ENCODE measurements at regions of chr3 and their contacts with region 1.

Region 1: DNA sequence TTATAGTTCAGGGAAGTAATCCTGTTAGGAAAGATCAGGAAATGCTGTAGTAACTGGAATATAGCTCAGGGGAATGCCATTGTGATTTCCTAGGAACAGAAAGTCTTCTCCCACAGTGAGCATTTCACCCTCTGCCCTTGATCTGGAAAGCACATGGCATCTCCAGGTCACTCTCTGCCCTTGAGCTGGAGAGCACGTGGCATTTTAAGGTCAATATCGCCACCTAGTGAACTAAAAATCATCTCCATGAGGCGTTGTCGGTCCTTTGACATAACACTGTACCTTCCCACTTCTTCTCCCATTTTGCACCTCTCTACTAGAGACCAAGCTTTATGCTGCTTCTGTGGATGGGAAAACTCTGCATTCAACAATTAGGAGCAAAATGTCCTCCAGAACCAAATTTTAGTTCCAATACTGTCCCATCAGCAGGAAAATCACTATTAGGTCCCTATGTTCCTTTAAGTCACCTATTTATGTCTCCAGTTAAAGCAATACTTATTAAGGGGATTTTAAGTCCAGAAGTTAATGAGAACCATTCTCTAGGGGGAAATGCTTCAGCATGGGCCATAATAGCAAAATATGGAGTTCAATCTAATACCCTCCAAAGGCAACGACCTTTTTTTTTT is 54.7 kb upstream of the GK5 start:
- DNase-seq: peak; percentile 44
- H3K4me3 Mint-ChIP-seq: no peak overlapping the region
- H3K27ac Mint-ChIP-seq: no peak overlapping the region
- H3K4me1 Mint-ChIP-seq: peaks cover 8% of the 10 kb centered on the region
- H3K27me3 Mint-ChIP-seq: no peaks in the 10 kb centered on the region

Region 2: DNA sequence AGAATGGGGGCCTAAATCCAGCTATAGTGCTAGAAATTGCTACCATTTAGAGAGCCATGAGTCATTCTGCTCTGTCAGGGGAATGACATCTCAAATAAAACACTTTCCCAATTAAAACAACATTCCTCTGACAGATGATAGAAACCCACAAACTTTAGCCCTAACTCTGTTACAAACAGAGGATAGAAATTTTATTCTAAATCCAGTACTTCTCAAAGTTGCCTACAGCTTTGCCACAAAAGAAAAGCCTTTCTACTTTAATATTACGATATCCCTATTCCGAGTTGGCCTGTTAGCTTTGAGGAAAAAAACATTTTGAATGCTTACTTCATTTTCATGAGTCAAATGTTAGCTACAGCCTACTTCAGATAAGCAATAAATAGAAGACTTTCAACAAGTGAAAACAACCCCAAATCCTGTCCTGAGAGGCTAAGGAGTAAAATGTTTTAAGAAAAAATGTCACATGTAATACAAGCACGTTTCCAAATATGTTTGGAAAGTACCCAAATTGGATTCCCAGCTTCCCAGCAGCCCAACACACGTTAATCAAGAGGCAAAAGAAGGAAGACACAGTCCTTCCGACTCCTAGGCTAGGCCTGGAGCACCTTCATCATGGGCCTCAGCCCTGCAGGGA is 320.0 kb before region 1 on chr3:
- CTCF ChIA-PET with region 1: interaction called, 20 read pairs
- POLR2A ChIA-PET with region 1: no interaction called
- intact Hi-C with region 1: loop called (anchors 1 kb)
- DNase-seq: no peak
- H3K4me3 Mint-ChIP-seq: no peak overlapping the region
- H3K27ac Mint-ChIP-seq: no peak overlapping the region
- H3K4me1 Mint-ChIP-seq: peaks cover 3% of the 10 kb centered on the region
- H3K27me3 Mint-ChIP-seq: no peaks in the 10 kb centered on the region

Region 3: GRCh38 chr3:142022381-142022780 is 257.7 kb before region 1 on chr3:
- CTCF ChIA-PET with region 1: interaction called, 4 read pairs
- POLR2A ChIA-PET with region 1: no interaction called
- intact Hi-C with region 1: loop called (anchors 5 kb)
- DNase-seq: peak; percentile 22
- H3K4me3 Mint-ChIP-seq: no peak overlapping the region
- H3K27ac Mint-ChIP-seq: no peak overlapping the region
- H3K4me1 Mint-ChIP-seq: peaks cover 17% of the 10 kb centered on the region
- H3K27me3 Mint-ChIP-seq: no peaks in the 10 kb centered on the region

Region 4: GRCh38 chr3:142129516-142130171 is 150.4 kb before region 1 on chr3:
- CTCF ChIA-PET with region 1: interaction called, 77 read pairs
- POLR2A ChIA-PET with region 1: no interaction called
- intact Hi-C with region 1: loop called (anchors 1 kb)
- DNase-seq: no peak
- H3K4me3 Mint-ChIP-seq: no peak overlapping the region
- H3K27ac Mint-ChIP-seq: no peak overlapping the region
- H3K4me1 Mint-ChIP-seq: no peaks in the 10 kb centered on the region
- H3K27me3 Mint-ChIP-seq: no peaks in the 10 kb centered on the region

Region 5: DNA sequence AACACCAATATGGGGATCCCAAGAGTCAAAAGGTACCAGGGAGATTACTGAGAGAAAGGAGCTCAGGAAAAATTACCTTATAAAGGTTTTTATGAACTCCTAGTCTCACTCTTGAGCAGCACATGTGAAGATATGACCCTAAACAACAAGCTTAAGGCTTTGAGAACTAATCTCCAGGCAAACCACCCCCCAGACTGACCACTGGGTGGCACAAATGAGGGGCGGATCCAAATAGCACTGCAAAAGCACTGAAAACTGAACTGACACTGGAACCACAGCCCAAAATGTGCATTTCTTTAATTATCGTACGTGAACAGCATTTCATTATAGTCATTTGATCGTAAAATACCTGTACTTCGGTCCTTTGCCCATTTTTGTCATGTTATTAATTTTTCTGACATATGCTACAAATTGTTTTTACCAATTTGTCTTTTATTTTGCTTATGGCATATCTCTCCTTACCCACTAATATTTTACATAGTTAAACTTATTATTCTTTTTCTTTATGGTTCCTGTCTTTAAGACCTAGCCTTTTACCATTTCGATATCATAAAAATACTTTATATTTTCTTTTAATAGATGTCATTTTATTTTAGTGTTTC is 99.2 kb before region 1 on chr3:
- CTCF ChIA-PET with region 1: interaction called, 27 read pairs
- POLR2A ChIA-PET with region 1: no interaction called
- intact Hi-C with region 1: loop called (anchors 2 kb)
- DNase-seq: peak; percentile 29
- H3K4me3 Mint-ChIP-seq: no peak overlapping the region
- H3K27ac Mint-ChIP-seq: no peak overlapping the region
- H3K4me1 Mint-ChIP-seq: no peaks in the 10 kb centered on the region
- H3K27me3 Mint-ChIP-seq: no peaks in the 10 kb centered on the region

Region 6: GRCh38 chr3:142296507-142296906 is 16.4 kb after region 1 on chr3:
- CTCF ChIA-PET with region 1: no interaction called
- POLR2A ChIA-PET with region 1: no interaction called
- intact Hi-C with region 1: no loop called
- DNase-seq: no peak
- H3K4me3 Mint-ChIP-seq: no peak overlapping the region
- H3K27ac Mint-ChIP-seq: no peak overlapping the region
- H3K4me1 Mint-ChIP-seq: no peaks in the 10 kb centered on the region
- H3K27me3 Mint-ChIP-seq: no peaks in the 10 kb centered on the region